ENCODE measurements at regions of chrX and their contacts with region 1.

Region 1: GRCh38 chrX:56366901-56367300 is 134.7 kb downstream of the KLF8 start:
- DNase-seq: peak; percentile 27
- H3K4me3 Mint-ChIP-seq: no peak overlapping the region
- H3K27ac Mint-ChIP-seq: peak overlapping the region; percentile 38
- H3K4me1 Mint-ChIP-seq: peaks cover 57% of the 10 kb centered on the region
- H3K27me3 Mint-ChIP-seq: no peaks in the 10 kb centered on the region

Region 2: GRCh38 chrX:55057675-55058249 is 1309.1 kb before region 1 on chrX:
- CTCF ChIA-PET with region 1: no interaction called
- POLR2A ChIA-PET with region 1: no interaction called
- intact Hi-C with region 1: no loop called
- DNase-seq: peak; percentile 23
- H3K4me3 Mint-ChIP-seq: peak overlapping the region; percentile 35
- H3K27ac Mint-ChIP-seq: no peak overlapping the region
- H3K4me1 Mint-ChIP-seq: peaks cover 18% of the 10 kb centered on the region
- H3K27me3 Mint-ChIP-seq: no peaks in the 10 kb centered on the region

Region 3: GRCh38 chrX:56284269-56284668 is 82.6 kb before region 1 on chrX:
- CTCF ChIA-PET with region 1: no interaction called
- POLR2A ChIA-PET with region 1: no interaction called
- intact Hi-C with region 1: no loop called
- DNase-seq: no peak
- H3K4me3 Mint-ChIP-seq: no peak overlapping the region
- H3K27ac Mint-ChIP-seq: no peak overlapping the region
- H3K4me1 Mint-ChIP-seq: peaks cover 10% of the 10 kb centered on the region
- H3K27me3 Mint-ChIP-seq: no peaks in the 10 kb centered on the region

Region 4: DNA sequence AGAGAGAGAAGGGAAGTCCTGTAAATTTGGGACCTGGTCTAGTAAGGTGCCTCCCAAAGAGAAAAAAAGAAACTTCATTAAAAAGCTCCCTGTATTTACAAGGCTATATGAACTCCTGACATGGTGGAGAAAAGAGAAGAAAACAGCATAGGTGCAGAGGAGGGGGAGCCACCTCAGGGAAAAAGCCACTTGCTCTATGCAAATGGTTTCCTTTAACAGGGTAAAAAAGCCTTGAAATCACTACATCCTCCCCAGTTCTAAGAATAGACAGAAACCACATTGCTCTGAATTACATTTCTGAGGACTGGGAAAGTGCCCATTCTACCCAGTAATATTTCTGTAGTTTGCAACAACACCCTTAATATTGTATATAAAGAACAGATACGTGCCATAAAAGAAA is 30.7 kb after region 1 on chrX:
- CTCF ChIA-PET with region 1: no interaction called
- POLR2A ChIA-PET with region 1: no interaction called
- intact Hi-C with region 1: loop called (anchors 5 kb)
- DNase-seq: peak; percentile 46
- H3K4me3 Mint-ChIP-seq: peak overlapping the region; percentile 45
- H3K27ac Mint-ChIP-seq: peak overlapping the region; percentile 85
- H3K4me1 Mint-ChIP-seq: peaks cover 58% of the 10 kb centered on the region
- H3K27me3 Mint-ChIP-seq: no peaks in the 10 kb centered on the region

Region 5: GRCh38 chrX:56519642-56520041 is 152.7 kb after region 1 on chrX:
- CTCF ChIA-PET with region 1: no interaction called
- POLR2A ChIA-PET with region 1: no interaction called
- intact Hi-C with region 1: no loop called
- DNase-seq: no peak
- H3K4me3 Mint-ChIP-seq: no peak overlapping the region
- H3K27ac Mint-ChIP-seq: no peak overlapping the region
- H3K4me1 Mint-ChIP-seq: no peaks in the 10 kb centered on the region
- H3K27me3 Mint-ChIP-seq: no peaks in the 10 kb centered on the region

Measured in activated CD4-positive, alpha-beta memory T cell treated with anti-CD3 and anti-CD28 coated beads for 36 hours (primary cell).